K562 (cell line): ENCODE measurements at regions of chr15 and their contacts with region 1.

Region 1: DNA sequence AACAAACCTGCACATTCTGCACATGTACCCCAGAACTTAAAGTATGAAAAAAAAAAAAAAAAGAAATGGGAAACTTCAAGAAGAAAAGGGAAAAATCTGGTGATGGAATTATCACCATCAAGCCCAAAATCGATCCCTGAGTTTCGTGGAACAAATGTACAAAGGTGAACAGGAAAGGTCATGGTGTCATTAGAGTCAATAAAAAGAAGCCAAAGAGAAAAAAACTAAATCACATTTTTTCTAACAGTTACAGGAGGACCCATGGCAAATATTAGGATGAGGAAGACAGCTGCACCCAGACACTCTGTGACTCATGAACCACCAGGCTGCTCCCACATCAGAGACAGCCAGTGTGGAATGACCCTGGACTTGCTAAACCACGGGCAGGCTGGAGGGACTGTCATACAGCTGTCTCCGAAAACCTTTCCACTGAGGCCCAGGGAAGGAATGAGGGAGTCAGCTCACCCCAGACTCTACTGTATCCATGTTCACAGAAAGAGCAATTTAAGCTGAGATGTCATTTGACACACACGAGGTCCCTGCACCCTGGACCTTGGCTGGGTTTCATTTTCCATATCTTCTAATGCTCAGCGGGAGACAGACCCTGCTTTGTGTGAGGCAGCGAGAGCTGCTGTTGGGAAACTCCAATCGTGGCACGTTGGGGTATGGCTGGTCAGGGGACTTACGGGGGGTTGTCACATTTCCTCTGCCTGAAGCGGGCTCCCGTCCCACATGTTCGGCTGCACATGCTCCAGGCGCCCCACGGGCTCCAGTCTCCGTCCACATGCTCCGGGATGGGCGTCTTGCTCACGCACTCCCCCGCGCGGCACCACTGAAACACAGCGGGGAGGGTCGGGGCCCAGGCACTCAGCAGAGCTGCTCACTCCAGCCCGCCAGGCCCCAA is 210.2 kb downstream of the ADAMTS17 start:
- DNase-seq: peak; percentile 72 to 82 (median 78)
- ATAC-seq: peak; percentile 99
- H3K4me3 ChIP-seq: no peak overlapping the region
- H3K27ac ChIP-seq: no peak overlapping the region; the same call in 2 of the 3 replicates
- H3K4me1 ChIP-seq: peaks cover 0 to 5% of the 10 kb centered on the region in 2 experiments; a peak in 2 of 5 replicates
- H3K27me3 ChIP-seq: peaks cover 0 to 42% of the 10 kb centered on the region in 2 experiments; a peak in 3 of 5 replicates
- CTCF ChIP-seq: peak; percentile 72 to 76 (median 73)
- EP300 ChIP-seq: no peak
- POLR2A ChIP-seq: no peak
- RAD21 ChIP-seq: peak; percentile 59 to 65

Region 2: GRCh38 chr15:99788183-99788582 is 343.4 kb before region 1 on chr15:
- CTCF ChIA-PET with region 1: no interaction called
- POLR2A ChIA-PET with region 1: no interaction called
- in situ Hi-C with region 1: no loop called
- intact Hi-C with region 1: loop called (anchors 5 kb)
- DNase-seq: no peak
- ATAC-seq: no peak
- H3K4me3 ChIP-seq: no peak overlapping the region
- H3K27ac ChIP-seq: no peak overlapping the region
- H3K4me1 ChIP-seq: no peaks in the 10 kb centered on the region
- H3K27me3 ChIP-seq: no peaks in the 10 kb centered on the region; a peak in 1 of 5 replicates
- CTCF ChIP-seq: no peak
- EP300 ChIP-seq: no peak
- POLR2A ChIP-seq: no peak
- RAD21 ChIP-seq: no peak

Region 3: DNA sequence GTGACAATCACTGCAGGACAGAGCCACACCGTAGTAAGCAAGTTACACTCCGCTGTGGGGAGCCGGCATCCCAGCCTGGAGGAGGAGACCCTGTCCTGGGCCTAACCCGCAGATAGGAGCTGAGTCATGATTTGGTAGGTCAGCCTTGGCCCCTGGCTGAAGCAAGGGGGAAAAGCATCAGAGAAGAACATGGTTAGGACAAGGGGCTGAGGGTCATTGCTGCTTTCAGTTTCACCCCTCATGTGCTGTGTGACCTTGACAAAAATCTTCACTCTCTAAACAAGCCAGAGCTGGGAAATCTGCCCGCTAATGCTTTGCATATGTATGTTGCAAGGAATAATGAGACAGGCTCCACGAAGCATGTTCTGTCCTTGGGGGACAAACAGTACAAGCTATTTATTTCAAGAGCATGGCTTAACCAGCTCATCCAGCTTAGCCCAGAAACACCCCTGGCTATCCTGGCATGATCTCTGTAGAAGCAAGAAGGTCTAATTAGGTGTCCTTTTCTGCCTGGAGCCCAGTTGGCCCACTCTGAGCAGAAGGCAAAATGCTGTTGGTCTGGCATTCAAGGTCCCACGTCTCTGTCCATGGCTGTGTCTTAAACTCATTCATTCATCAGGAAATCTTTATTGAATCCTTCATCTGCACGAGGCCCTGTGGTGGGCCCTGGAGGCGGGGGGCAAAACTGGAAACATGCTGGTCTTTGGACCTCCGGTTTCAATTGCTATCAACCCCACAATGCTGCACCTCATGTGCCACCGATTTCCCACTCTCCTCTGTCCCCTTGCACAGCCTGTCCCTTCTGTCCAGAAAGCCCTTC is 177.0 kb before region 1 on chr15:
- CTCF ChIA-PET with region 1: no interaction called
- POLR2A ChIA-PET with region 1: interaction called, 4 read pairs
- in situ Hi-C with region 1: no loop called
- intact Hi-C with region 1: loop called (anchors 10 kb)
- DNase-seq: no peak
- ATAC-seq: no peak
- H3K4me3 ChIP-seq: no peak overlapping the region
- H3K27ac ChIP-seq: no peak overlapping the region
- H3K4me1 ChIP-seq: no peaks in the 10 kb centered on the region
- H3K27me3 ChIP-seq: 0 out of 5 replicates have a peak, but pooled peaks cover 0 to 3% of the 10 kb centered on the region in 2 experiments
- CTCF ChIP-seq: no peak
- EP300 ChIP-seq: no peak
- POLR2A ChIP-seq: no peak
- RAD21 ChIP-seq: no peak

Region 4: GRCh38 chr15:100033140-100033857 is 98.3 kb before region 1 on chr15:
- CTCF ChIA-PET with region 1: no interaction called
- POLR2A ChIA-PET with region 1: no interaction called
- in situ Hi-C with region 1: no loop called
- intact Hi-C with region 1: no loop called
- DNase-seq: no peak
- ATAC-seq: no peak
- H3K4me3 ChIP-seq: no peak overlapping the region
- H3K27ac ChIP-seq: no peak overlapping the region
- H3K4me1 ChIP-seq: no peaks in the 10 kb centered on the region
- H3K27me3 ChIP-seq: peaks cover 0 to 14% of the 10 kb centered on the region in 2 experiments; a peak in 3 of 5 replicates
- CTCF ChIP-seq: no peak
- EP300 ChIP-seq: no peak
- POLR2A ChIP-seq: no peak
- RAD21 ChIP-seq: no peak